ENCODE measurements at regions of chr9 and their contacts with region 1.

Region 1: DNA sequence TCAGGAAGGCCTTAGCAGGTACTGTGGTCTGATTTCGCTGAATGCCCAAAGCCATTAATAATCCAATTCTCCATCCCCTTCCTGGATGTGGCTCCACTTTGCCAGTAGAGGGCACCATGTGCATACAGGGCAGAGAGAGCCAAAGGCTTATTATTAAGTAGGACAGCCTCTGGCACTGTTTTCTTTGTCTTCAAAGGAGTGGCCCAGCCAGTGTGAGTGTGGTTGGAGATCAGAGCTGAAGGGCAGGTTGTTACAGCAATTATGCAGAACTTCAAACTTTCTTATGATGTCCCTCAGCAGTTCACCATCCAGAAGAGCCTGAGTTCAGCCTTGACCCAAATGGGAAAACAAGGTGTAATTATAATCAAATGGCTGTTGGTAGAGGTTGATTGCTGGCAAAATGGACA is 38.6 kb upstream of the CEMIP2 start:
- DNase-seq: peak; percentile 79
- H3K4me3 Mint-ChIP-seq: no peak overlapping the region
- H3K27ac Mint-ChIP-seq: no peak overlapping the region
- H3K4me1 Mint-ChIP-seq: peaks cover 6% of the 10 kb centered on the region
- H3K27me3 Mint-ChIP-seq: no peaks in the 10 kb centered on the region
- CTCF ChIP-seq: peak; percentile 88

Region 2: DNA sequence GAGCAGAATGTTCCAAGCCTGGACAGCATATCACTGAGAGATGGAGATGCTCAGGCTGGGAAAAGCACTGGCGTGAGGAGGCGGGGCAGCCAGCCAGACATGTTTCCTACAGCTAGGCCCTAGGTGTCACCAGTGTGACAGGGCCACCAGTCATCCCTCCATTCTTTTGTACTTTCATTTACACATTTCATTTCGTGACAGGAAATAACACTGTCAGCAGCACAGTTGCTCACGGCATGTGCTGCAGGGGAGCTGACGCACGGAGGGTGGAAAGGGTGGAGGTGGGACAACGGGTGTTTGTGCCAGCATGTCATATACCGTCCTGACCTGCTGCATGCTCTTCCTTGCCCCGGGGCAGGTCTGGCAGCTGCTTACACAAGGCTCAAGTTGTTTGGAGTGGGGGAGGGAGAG is 23.8 kb before region 1 on chr9:
- CTCF ChIA-PET with region 1: interaction called, 26 read pairs
- POLR2A ChIA-PET with region 1: no interaction called
- intact Hi-C with region 1: no loop called
- DNase-seq: peak; percentile 51
- H3K4me3 Mint-ChIP-seq: peak overlapping the region; percentile 60
- H3K27ac Mint-ChIP-seq: peak overlapping the region; percentile 27
- H3K4me1 Mint-ChIP-seq: peaks cover 14% of the 10 kb centered on the region
- H3K27me3 Mint-ChIP-seq: no peaks in the 10 kb centered on the region
- CTCF ChIP-seq: no peak

Region 3: GRCh38 chr9:71819115-71819739 is 12.3 kb after region 1 on chr9:
- CTCF ChIA-PET with region 1: interaction called, 95 read pairs
- POLR2A ChIA-PET with region 1: no interaction called
- intact Hi-C with region 1: no loop called
- DNase-seq: peak; percentile 56
- H3K4me3 Mint-ChIP-seq: no peak overlapping the region
- H3K27ac Mint-ChIP-seq: no peak overlapping the region
- H3K4me1 Mint-ChIP-seq: no peaks in the 10 kb centered on the region
- H3K27me3 Mint-ChIP-seq: no peaks in the 10 kb centered on the region
- CTCF ChIP-seq: peak; percentile 62

Region 4: GRCh38 chr9:71975833-71976232 is 168.9 kb after region 1 on chr9:
- CTCF ChIA-PET with region 1: interaction called, 13 read pairs
- POLR2A ChIA-PET with region 1: no interaction called
- intact Hi-C with region 1: loop called (anchors 2 kb)
- DNase-seq: peak; percentile 2
- H3K4me3 Mint-ChIP-seq: no peak overlapping the region
- H3K27ac Mint-ChIP-seq: no peak overlapping the region
- H3K4me1 Mint-ChIP-seq: no peaks in the 10 kb centered on the region
- H3K27me3 Mint-ChIP-seq: no peaks in the 10 kb centered on the region
- CTCF ChIP-seq: no peak

Region 5: DNA sequence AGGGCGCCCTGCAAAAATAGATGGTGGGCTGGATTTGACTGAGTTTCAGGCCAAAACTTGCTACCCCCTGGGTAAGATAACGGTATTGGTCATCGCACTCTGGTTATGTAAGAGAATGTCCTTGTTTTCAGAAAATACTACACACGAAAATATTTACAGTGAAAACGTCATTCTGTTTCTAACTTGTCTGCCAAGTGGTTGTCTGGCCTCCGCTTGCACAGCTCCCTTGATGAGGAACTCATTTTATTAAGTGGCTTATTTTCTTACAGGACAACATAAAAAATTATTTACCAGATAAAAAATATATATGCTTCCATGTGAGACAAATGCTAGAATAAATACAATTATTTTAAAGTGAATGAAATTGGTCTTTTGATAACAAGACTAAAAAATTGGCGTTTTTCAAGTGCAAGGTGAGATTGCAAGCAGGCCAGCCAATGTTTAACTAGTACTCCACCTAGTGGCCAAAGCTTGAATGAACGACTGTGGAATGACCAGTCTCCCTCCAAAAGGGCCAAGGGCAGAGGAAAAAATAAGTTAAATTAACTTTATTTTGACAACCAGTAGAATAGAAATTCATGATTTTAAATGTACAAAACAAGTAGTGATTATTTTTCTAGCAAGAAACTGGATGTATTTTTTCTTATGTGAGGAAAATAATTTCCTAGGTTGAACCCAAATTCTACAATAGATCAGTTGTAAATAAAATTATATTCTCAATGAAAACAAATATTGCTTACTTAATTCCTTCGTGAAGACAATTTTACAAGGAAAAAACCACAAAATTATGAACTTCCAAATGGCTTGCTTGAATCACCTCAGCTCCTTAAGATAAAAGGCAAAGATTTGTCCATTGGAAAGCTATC is 464.9 kb after region 1 on chr9:
- CTCF ChIA-PET with region 1: interaction called, 10 read pairs
- POLR2A ChIA-PET with region 1: no interaction called
- intact Hi-C with region 1: loop called (anchors 5 kb)
- DNase-seq: peak; percentile 77
- H3K4me3 Mint-ChIP-seq: no peak overlapping the region
- H3K27ac Mint-ChIP-seq: no peak overlapping the region
- H3K4me1 Mint-ChIP-seq: peaks cover 6% of the 10 kb centered on the region
- H3K27me3 Mint-ChIP-seq: no peaks in the 10 kb centered on the region
- CTCF ChIP-seq: peak; percentile 74

Measured in MCF 10A (cell line).